ENCODE measurements at regions of chr9 and their contacts with region 1.

Region 1: DNA sequence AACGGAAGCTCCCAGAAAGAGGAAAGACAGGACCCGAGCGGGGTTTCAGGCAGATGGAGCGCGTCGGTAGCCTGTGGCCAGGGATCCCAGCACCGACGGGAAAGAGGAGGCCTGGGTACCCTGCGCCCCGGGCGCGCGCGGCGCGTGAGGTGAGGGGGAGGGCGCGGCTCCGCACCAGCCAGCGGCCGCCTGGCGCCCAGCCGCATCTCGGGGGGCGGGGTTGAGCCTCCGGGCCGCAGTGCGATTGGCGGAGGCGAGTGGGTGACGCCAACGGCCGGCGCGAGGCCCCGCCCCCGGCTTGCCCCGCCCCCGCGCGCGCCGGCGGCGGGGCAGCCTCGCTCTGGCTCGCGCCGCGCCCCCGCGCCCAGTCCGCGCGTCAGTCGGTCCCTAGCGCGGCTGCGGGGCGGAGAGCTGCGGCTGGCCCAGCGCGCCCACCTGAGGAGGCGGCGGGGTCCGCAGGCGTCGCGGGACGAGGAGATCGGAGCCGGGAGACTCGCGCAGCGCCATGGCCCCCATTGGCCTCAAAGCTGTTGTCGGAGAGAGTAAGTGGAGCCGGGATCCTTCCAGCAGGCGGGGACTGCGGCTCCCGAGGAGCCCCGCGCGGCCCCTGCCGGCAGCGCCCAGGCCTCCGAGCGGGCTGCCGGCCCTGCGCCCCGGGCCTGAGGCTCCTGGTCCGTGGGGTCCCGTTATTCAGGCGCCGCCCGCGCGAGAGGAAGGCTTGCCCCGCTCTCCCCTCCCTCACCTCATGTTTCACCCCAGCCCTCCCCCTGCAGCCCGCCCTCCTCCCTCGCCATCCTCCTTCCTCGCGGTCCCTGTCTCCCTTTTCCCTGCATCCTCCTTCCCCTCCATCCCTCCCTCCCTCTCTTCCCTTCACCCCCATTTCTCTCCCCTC is at the start of gene STXBP1:
- DNase-seq: peak; percentile 89
- H3K4me3 Mint-ChIP-seq: peak within 1 kb of the TSS; percentile 95
- H3K27ac Mint-ChIP-seq: peak within 1 kb of the TSS; percentile 91
- H3K4me1 Mint-ChIP-seq: peaks cover 40% of the 10 kb centered on the region
- H3K27me3 Mint-ChIP-seq: peaks cover 45% of the 10 kb centered on the region
- total RNA-seq, gene STXBP1: 26.1 and 32.9 TPM in 2 replicates

Region 2: DNA sequence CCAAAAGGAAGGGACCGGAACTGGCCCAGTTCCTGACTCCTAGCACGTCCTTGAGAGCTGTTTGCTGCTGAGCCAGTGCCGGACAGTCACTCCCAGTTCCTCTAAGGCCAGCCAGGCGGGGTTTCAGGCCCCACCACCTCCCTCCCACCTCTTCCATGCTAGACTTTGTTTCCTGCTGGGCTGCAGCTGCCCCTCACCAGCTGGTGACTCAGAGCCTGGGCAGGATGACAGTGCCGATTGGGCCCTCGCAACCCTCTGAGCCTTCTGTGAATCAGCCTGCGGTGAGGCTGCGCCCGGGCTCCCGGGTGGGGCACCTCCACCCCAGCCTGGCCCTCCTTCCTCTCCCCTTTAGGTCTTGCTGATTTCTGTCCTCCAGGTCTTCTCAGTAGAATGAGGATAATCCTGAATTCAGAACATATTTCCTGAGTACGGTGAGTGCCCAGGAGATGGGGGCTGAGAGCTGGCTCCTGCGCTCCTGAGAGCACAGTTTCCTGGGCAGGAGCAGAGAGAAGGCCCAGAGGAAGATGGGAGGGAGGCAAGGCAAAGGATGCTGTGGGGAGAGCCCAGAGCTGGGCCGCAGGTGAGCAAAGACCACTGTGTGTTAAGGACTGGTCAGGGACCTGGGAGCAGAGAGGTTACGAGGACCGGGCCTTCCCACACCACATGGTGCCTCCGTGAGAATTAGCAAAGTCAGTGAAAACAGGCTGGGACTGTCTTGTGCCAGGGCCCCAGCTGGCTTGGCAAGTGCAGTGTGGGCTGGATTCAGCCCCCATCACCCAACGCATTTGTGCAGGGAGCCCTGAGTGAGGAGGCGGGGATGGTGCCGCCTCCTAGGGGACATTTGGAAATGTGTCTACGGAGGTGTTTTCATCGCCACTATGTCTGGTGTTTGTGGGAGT is 32.9 kb before region 1 on chr9:
- intact Hi-C with region 1: loop called (anchors 5 kb)
- DNase-seq: peak; percentile 66
- H3K4me3 Mint-ChIP-seq: peak overlapping the region; percentile 78
- H3K27ac Mint-ChIP-seq: peak overlapping the region; percentile 76
- H3K4me1 Mint-ChIP-seq: peaks cover 44% of the 10 kb centered on the region
- H3K27me3 Mint-ChIP-seq: no peaks in the 10 kb centered on the region

Region 3: GRCh38 chr9:127698985-127699670 is 87.0 kb after region 1 on chr9:
- intact Hi-C with region 1: loop called (anchors 5 kb)
- DNase-seq: peak; percentile 82
- H3K4me3 Mint-ChIP-seq: peak overlapping the region; percentile 49
- H3K27ac Mint-ChIP-seq: peak overlapping the region; percentile 22
- H3K4me1 Mint-ChIP-seq: peaks cover 15% of the 10 kb centered on the region
- H3K27me3 Mint-ChIP-seq: peaks cover 2% of the 10 kb centered on the region

Region 4: DNA sequence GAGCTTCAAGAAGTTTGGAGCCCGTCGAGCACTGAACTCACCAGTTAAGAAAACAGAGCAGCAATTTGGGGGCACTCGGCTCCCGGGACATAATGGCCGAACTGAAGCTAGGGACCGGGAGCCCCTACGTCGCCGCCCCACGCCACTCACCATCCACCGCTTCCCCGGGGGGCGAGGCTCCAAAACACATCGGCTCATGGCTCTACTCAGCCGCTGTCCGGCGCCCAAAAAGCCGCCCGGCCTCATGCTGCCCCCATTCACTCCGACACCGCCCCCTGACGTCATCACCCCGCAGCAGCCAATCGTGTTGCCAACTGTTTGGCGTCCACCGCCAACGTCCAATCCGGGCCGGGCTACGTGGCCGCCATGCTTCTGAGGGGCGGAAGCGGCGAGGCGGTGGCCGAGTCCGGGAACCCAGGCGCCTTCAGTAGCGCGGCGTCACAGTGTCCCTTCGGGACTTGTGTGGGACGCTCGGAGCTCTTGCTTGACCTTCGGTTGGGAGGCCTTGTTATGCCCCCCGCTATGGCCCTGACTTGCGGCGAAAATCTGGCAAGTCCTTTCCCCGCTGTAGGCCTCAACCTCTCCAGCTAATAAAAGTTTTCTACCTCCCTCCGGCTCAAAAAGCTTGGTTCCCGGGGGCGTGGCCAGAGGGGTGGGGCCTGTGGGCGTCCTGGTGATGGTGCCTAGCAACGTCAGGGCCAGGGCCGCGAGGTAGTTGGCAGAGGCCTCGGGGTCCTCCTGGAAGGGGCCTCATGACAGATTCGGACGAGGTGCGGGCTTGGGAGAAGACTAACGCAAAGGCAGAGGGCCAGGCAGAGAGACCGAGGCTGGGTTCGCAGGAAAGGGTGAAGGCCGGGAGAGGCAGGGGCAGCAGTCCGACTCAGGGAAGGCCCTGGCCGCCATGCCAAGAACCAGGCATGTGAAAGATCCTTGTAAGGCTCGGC is 103.5 kb after region 1 on chr9 and contains the starts of genes PTRH1 and TTC16:
- intact Hi-C with region 1: loop called (anchors 2 kb)
- DNase-seq: peak; percentile 97
- H3K4me3 Mint-ChIP-seq: peak within 1 kb of the TSS; percentile 98
- H3K27ac Mint-ChIP-seq: peak within 1 kb of the TSS; percentile 98
- H3K4me1 Mint-ChIP-seq: peaks cover 28% of the 10 kb centered on the region
- H3K27me3 Mint-ChIP-seq: peaks cover 2% of the 10 kb centered on the region
- total RNA-seq, gene PTRH1: 22.9 and 23.5 TPM in 2 replicates
- total RNA-seq, gene TTC16: 0.10 TPM in 1 of 2 replicates, not detected in the other

Region 5: GRCh38 chr9:127930231-127931091 is 318.3 kb after region 1 on chr9 and contains the start of gene PIP5KL1:
- intact Hi-C with region 1: loop called (anchors 5 kb)
- DNase-seq: peak; percentile 74
- H3K4me3 Mint-ChIP-seq: peak within 1 kb of the TSS; percentile 68
- H3K27ac Mint-ChIP-seq: peak within 1 kb of the TSS; percentile 36
- H3K4me1 Mint-ChIP-seq: peaks cover 31% of the 10 kb centered on the region
- H3K27me3 Mint-ChIP-seq: peaks cover 9% of the 10 kb centered on the region
- total RNA-seq, gene PIP5KL1: 1.1 and 1.2 TPM in 2 replicates

Measured in activated T-helper 1 cell treated with anti-CD3 and anti-CD28 coated beads, Interleukin-12 subunit alpha, Interleukin-12 subunit beta, Interleukin-2, Interleukin-4 antibody, amounts not matched to agents 30 ng/mL and 10 ng/mL and 1 ng/mL, durations not matched to agents 14 hours and 24 hours and 36 hours (primary cell).